Psoas muscle (tissue), 8 donors: ENCODE measurements at regions of chr6 and their contacts with region 1.

Region 1: GRCh38 chr6:99354983-99355382 is 5.5 kb upstream of the FAXC start:
- DNase-seq: no peak
- ATAC-seq: no peak
- H3K4me3 ChIP-seq: no peak overlapping the region
- H3K27ac ChIP-seq: no peak overlapping the region
- H3K4me1 ChIP-seq: peaks cover 2% of the 10 kb centered on the region
- H3K27me3 ChIP-seq: peaks cover 2 to 40% (median 4%) of the 10 kb centered on the region in 3 donors
- CTCF ChIP-seq: no peak

Region 2: DNA sequence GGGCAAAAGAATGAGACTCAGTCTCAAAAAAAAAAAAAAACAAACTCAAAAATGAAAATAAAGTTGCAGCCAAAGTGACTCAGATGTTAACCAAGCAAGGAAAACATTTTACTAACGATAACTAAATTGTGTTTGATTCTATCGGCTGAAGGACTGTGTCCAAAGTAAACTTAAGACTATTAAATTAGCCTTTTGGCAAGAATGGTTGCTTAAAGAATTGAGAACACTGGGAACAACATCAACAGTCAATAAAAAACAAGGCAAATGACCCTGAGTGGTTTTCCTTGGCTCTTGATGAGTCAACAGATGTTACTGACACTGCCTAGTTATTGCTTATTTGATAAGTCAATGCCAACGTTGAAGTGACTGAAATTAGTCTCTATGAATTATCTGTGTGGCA is 483.9 kb before region 1 on chr6:
- intact Hi-C with region 1: loop called in 1 of 2 experiments (anchors 5 kb)
- DNase-seq: no peak
- ATAC-seq: no peak
- H3K4me3 ChIP-seq: no peak overlapping the region
- H3K27ac ChIP-seq: no peak overlapping the region
- H3K4me1 ChIP-seq: no peaks in the 10 kb centered on the region
- H3K27me3 ChIP-seq: no peaks in the 10 kb centered on the region
- CTCF ChIP-seq: no peak

Region 3: DNA sequence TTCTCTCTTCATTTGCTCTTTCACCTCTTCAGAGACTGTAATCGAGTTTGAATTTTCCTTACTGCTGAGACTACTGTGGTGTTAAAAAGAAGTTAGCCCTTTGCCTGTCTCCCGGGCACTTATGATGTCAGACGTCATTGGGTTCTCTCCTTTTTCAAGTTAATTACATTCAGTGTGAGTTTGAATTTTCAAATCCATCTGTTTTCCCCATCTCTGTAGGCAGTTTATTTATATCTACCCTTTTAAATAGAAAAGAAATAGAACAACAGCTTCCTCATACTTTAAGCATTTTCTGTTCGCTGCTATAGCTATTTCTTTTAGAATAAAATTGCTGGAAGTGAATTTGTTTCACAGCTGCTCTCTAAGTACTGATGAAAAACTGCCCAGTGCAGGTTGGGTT is 557.7 kb after region 1 on chr6:
- intact Hi-C with region 1: no loop called
- DNase-seq: no peak
- ATAC-seq: no peak
- H3K4me3 ChIP-seq: no peak overlapping the region
- H3K27ac ChIP-seq: no peak overlapping the region
- H3K4me1 ChIP-seq: no peaks in the 10 kb centered on the region
- H3K27me3 ChIP-seq: no peaks in the 10 kb centered on the region
- CTCF ChIP-seq: no peak